ENCODE measurements at regions of chr10 and their contacts with region 1.

Region 1: GRCh38 chr10:329361-330099 is 194.3 kb downstream of the ZMYND11 start:
- DNase-seq: peak; percentile 82
- H3K4me3 ChIP-seq: peak overlapping the region; percentile 57
- H3K27ac ChIP-seq: peak overlapping the region; percentile 51
- H3K4me1 ChIP-seq: peaks cover 89% of the 10 kb centered on the region
- CTCF ChIP-seq: no peak

Region 2: DNA sequence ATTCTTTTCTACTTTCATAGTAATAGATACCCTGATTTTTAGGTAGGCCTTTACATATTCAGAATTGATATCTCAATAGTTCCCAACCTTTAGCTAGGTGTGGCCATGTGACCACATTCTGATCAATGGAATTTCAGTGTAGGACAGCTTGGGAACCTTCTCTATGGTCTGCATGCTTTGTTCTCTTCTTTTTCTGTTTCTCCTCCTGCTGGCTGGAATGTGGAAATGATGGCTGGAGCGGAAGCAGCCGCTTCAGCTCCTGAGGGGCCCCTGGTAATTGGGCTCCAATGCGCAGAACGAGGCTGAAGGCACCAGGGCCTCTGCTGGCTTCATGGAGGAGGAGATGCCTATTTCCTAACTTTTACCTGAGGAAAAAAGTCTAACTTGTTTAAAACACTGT is 41.7 kb before region 1 on chr10:
- CTCF ChIA-PET with region 1: no interaction called
- POLR2A ChIA-PET with region 1: no interaction called
- intact Hi-C with region 1: loop called (anchors 2 kb)
- DNase-seq: no peak
- H3K4me3 ChIP-seq: peak overlapping the region; percentile 36
- H3K27ac ChIP-seq: peak overlapping the region; percentile 94
- H3K4me1 ChIP-seq: peaks cover 73% of the 10 kb centered on the region
- CTCF ChIP-seq: peak; percentile 26; the same call in 1 of the 2 replicates

Region 3: GRCh38 chr10:317271-317769 is 12.2 kb before region 1 on chr10:
- CTCF ChIA-PET with region 1: interaction called, 4 read pairs
- POLR2A ChIA-PET with region 1: interaction called, 33 read pairs
- intact Hi-C with region 1: loop called (anchors 2 kb)
- DNase-seq: peak; percentile 91
- H3K4me3 ChIP-seq: peak overlapping the region; percentile 32
- H3K27ac ChIP-seq: peak overlapping the region; percentile 71
- H3K4me1 ChIP-seq: peaks cover 58% of the 10 kb centered on the region
- CTCF ChIP-seq: no peak

Region 4: DNA sequence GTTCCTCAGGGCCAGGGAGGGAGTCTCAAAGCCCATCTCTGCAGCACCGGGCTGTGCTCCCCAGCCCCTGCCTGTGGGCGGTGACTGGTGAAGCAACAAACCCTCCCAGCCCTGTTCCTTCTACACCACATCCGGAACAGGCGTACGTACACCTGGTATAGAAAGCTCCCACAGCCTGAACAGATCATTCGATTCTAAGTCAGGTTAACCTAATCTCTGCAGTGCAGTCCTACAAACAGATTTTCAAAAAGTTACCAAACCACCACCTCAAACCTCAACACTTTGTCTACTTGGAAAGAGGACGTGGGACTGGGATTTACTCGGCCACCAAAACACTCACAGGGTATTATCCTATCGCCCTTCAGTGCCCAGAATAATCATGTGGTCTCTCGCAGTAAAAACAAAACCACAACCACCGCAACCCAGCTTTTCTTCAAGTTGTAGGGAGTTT is 121.5 kb after region 1 on chr10:
- CTCF ChIA-PET with region 1: no interaction called
- POLR2A ChIA-PET with region 1: no interaction called
- intact Hi-C with region 1: loop called (anchors 5 kb)
- DNase-seq: peak; percentile 93
- H3K4me3 ChIP-seq: peak overlapping the region; percentile 55
- H3K27ac ChIP-seq: peak overlapping the region; percentile 85
- H3K4me1 ChIP-seq: peaks cover 41% of the 10 kb centered on the region
- CTCF ChIP-seq: no peak

Region 5: DNA sequence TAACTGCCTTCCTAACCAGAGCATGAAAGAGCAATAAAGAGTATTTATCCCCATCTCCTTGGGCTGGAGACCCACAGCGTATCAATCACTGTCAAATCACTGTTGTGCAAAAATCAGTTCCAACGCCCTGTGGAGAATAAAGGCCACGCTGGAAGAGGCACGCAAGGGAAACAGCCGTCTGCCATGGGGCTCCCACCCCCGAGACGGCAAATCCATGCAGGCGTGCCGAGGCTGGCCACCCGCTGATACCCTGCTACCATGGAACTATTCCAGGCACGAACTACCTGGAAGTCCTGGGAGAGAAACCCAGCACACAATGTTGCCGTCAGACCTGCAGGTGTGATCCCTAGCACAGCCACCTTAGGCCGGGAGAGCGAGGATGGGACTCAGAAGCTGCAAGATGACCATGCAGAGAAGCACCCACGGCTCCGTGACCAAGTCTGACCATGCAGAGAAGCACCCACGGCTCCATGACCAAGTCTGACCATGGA is 174.6 kb after region 1 on chr10:
- CTCF ChIA-PET with region 1: no interaction called
- POLR2A ChIA-PET with region 1: no interaction called
- intact Hi-C with region 1: loop called (anchors 1 kb)
- DNase-seq: no peak
- H3K4me3 ChIP-seq: no peak overlapping the region
- H3K27ac ChIP-seq: no peak overlapping the region
- H3K4me1 ChIP-seq: peaks cover 34% of the 10 kb centered on the region
- CTCF ChIP-seq: no peak

Measured in OCI-LY7 (cell line).